SK-N-SH (cell line): ENCODE measurements at regions of chr13 and their contacts with region 1.

Region 1: DNA sequence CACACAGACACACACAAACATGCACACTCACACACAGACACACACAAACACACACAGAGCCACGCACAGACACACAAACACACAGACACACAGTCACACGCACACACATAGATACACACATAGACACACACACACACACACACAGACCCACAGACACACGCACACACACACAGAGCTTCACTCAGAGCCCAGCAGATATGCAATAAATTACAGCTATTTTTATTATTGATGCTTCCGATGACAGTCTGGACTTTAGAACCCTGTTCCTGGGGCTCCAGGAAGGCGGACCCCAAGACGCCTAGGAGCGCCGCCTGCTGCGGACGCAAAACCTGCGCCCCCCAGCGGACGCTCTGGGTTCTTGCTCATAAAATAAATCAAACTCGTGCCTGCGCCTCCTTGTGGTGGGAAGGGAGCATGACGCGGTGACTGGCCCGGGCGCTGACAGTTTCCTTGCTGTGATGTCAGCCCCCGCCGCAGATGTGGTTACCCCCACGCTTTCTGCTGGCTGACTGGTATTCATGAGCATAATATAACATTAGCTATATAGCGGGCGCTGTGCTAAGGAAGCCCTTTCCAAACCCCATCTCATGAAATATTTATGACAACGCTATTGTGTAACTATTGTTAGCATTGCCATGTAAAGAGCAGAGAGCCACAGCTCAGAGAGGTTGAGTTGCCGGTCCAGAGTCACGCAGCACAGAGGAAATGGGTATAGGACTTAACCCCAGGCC is 64.4 kb upstream of the TM9SF2 start:
- DNase-seq: peak; percentile 86
- H3K4me3 ChIP-seq: peak overlapping the region; percentile 2 to 55; a peak in 3 of 4 replicates
- H3K27ac ChIP-seq: no peak overlapping the region
- H3K4me1 ChIP-seq: peaks cover 3 to 10% of the 10 kb centered on the region in 2 experiments; a peak in 2 of 4 replicates
- H3K27me3 ChIP-seq: peaks cover 7% of the 10 kb centered on the region; the same call in 1 of the 2 replicates
- CTCF ChIP-seq: peak; percentile 100
- EP300 ChIP-seq: no peak
- RAD21 ChIP-seq: peak; percentile 83

Region 2: DNA sequence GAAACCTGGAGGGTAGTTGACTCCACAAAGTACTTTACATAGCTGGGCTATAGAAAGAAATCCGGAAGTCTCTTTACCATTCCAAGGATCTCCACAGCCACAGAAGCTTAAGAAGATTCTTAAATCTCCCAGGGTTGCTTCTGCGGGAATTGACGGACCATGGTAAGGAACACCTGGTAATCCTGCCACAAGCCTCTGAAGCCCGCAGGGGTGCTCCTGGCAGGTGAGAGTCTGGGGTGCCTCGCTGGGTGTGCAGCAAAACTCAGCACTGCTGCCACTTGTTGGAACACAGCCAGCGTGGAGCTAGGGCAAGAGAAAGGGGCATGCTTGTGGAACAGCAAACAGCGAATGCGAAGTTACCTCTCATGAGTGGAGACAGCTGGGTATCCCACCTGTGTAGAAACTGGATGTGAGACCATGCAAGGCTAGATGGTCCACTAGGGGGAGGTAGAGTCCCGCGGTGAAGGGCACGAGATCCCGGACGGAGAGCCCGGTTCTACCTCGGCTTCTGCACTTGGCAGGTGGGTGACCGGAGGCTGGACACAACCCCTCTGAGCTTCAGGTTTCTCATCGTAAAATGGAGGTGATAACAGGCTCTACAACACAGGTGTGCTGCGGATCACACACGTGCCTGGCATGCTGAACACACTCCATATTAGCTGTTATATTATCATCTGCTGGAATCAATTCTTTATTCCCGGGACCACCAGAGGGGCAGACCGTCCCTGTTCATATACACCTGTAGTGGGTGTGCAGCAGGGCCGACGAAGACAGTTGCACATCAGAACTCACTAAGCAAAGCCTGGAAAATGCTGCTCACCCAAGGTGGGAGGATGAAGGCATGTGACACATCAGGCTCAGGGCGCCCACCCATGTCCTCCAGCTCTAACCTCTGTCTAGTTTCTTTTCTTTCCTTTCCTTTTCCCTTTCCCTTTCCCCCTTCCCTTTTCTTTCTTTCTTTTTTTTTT is 260.3 kb before region 1 on chr13:
- CTCF ChIA-PET with region 1: interaction called, 87 read pairs
- POLR2A ChIA-PET with region 1: no interaction called
- DNase-seq: peak; percentile 85
- H3K4me3 ChIP-seq: peak overlapping the region; percentile 6 to 26; a peak in 2 of 4 replicates
- H3K27ac ChIP-seq: no peak overlapping the region
- H3K4me1 ChIP-seq: peaks cover 0 to 6% of the 10 kb centered on the region in 2 experiments; a peak in 1 of 4 replicates
- H3K27me3 ChIP-seq: no peaks in the 10 kb centered on the region
- CTCF ChIP-seq: peak; percentile 86
- EP300 ChIP-seq: no peak
- RAD21 ChIP-seq: peak; percentile 92

Region 3: GRCh38 chr13:99205616-99206220 is 231.1 kb before region 1 on chr13:
- CTCF ChIA-PET with region 1: interaction called, 38 read pairs
- POLR2A ChIA-PET with region 1: interaction called, 3 read pairs
- DNase-seq: no peak
- H3K4me3 ChIP-seq: no peak overlapping the region
- H3K27ac ChIP-seq: no peak overlapping the region
- H3K4me1 ChIP-seq: peaks cover 0 to 4% of the 10 kb centered on the region in 2 experiments; a peak in 2 of 4 replicates
- H3K27me3 ChIP-seq: no peaks in the 10 kb centered on the region
- CTCF ChIP-seq: no peak
- EP300 ChIP-seq: no peak
- RAD21 ChIP-seq: no peak

Region 4: GRCh38 chr13:99275093-99275469 is 161.8 kb before region 1 on chr13:
- CTCF ChIA-PET with region 1: interaction called, 249 read pairs
- POLR2A ChIA-PET with region 1: no interaction called
- DNase-seq: no peak
- H3K4me3 ChIP-seq: no peak overlapping the region
- H3K27ac ChIP-seq: no peak overlapping the region
- H3K4me1 ChIP-seq: no peaks in the 10 kb centered on the region
- H3K27me3 ChIP-seq: no peaks in the 10 kb centered on the region
- CTCF ChIP-seq: no peak
- EP300 ChIP-seq: no peak
- RAD21 ChIP-seq: no peak

Region 5: GRCh38 chr13:99296398-99296797 is 140.5 kb before region 1 on chr13:
- CTCF ChIA-PET with region 1: interaction called, 11 read pairs
- POLR2A ChIA-PET with region 1: no interaction called
- DNase-seq: no peak
- H3K4me3 ChIP-seq: no peak overlapping the region
- H3K27ac ChIP-seq: peak overlapping the region in 1 of 2 experiments; percentile 40; a peak in 2 of 4 replicates
- H3K4me1 ChIP-seq: peaks cover 5 to 11% of the 10 kb centered on the region in 2 experiments; a peak in 2 of 4 replicates
- H3K27me3 ChIP-seq: no peaks in the 10 kb centered on the region
- CTCF ChIP-seq: no peak
- EP300 ChIP-seq: no peak
- RAD21 ChIP-seq: no peak

Region 6: GRCh38 chr13:99366075-99366987 is 70.5 kb before region 1 on chr13:
- CTCF ChIA-PET with region 1: no interaction called
- POLR2A ChIA-PET with region 1: no interaction called
- DNase-seq: no peak
- H3K4me3 ChIP-seq: no peak overlapping the region
- H3K27ac ChIP-seq: no peak overlapping the region
- H3K4me1 ChIP-seq: peaks cover 0 to 7% of the 10 kb centered on the region in 2 experiments; a peak in 1 of 4 replicates
- H3K27me3 ChIP-seq: no peaks in the 10 kb centered on the region
- CTCF ChIP-seq: no peak
- EP300 ChIP-seq: no peak
- RAD21 ChIP-seq: no peak

Region 7: GRCh38 chr13:99448546-99448945 is 11.7 kb after region 1 on chr13:
- CTCF ChIA-PET with region 1: interaction called, 20 read pairs
- POLR2A ChIA-PET with region 1: no interaction called
- DNase-seq: no peak
- H3K4me3 ChIP-seq: no peak overlapping the region
- H3K27ac ChIP-seq: no peak overlapping the region
- H3K4me1 ChIP-seq: no peaks in the 10 kb centered on the region
- H3K27me3 ChIP-seq: no peaks in the 10 kb centered on the region
- CTCF ChIP-seq: no peak
- EP300 ChIP-seq: no peak
- RAD21 ChIP-seq: no peak